ENCODE measurements at regions of chr17 and their contacts with region 1.

Region 1: GRCh38 chr17:996554-997344 is at the start of gene TIMM22:
- DNase-seq: peak; percentile 95
- ATAC-seq: peak; percentile 97
- H3K4me3 Mint-ChIP-seq: peak within 1 kb of the TSS; percentile 97
- H3K27ac Mint-ChIP-seq: peak within 1 kb of the TSS; percentile 97
- H3K4me1 Mint-ChIP-seq: peaks cover 25% of the 10 kb centered on the region
- H3K27me3 Mint-ChIP-seq: no peaks in the 10 kb centered on the region
- total RNA-seq, gene TIMM22: 9.7 to 12.5 TPM

Region 2: GRCh38 chr17:752002-752619 is 244.6 kb before region 1 on chr17 and contains the start of gene GEMIN4:
- CTCF ChIA-PET with region 1: interaction called, 16 read pairs
- DNase-seq: peak; percentile 96
- ATAC-seq: peak; percentile 88
- H3K4me3 Mint-ChIP-seq: peak within 1 kb of the TSS; percentile 89
- H3K27ac Mint-ChIP-seq: peak within 1 kb of the TSS; percentile 93
- H3K4me1 Mint-ChIP-seq: peaks cover 32% of the 10 kb centered on the region
- H3K27me3 Mint-ChIP-seq: no peaks in the 10 kb centered on the region
- total RNA-seq, gene GEMIN4: 40.8 to 43.0 TPM

Region 3: GRCh38 chr17:781805-782731 is 214.7 kb before region 1 on chr17 and contains the starts of genes GLOD4 and MRM3:
- CTCF ChIA-PET with region 1: interaction called, 33 read pairs
- DNase-seq: peak; percentile 95
- ATAC-seq: peak; percentile 96
- H3K4me3 Mint-ChIP-seq: peak within 1 kb of the TSS; percentile 97
- H3K27ac Mint-ChIP-seq: peak within 1 kb of the TSS; percentile 97
- H3K4me1 Mint-ChIP-seq: peaks cover 37% of the 10 kb centered on the region
- H3K27me3 Mint-ChIP-seq: no peaks in the 10 kb centered on the region
- total RNA-seq, gene GLOD4: 45.1 to 56.3 TPM
- total RNA-seq, gene MRM3: 21.7 to 26.5 TPM

Region 4: DNA sequence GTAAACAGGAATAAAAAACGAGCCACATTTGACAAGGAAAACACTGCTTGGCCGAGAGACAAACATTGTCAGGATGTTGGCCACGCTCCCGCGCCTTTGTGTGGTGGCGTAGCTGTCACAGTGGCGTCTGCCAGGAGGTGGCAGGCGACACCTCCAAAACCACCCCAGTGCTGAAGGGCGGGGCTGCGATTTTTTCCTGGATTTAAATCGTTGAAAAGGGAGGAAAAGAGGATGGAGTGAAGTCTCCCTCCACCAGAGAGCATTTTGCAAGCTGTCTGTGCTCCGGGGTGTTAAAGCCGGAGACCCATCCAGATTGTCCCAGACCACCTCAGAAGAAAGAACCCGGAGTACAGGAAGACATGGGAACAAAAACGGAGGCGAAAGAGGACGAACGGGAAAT is 201.9 kb before region 1 on chr17:
- CTCF ChIA-PET with region 1: interaction called, 42 read pairs
- DNase-seq: peak; percentile 54
- ATAC-seq: peak; percentile 82
- H3K4me3 Mint-ChIP-seq: no peak overlapping the region
- H3K27ac Mint-ChIP-seq: no peak overlapping the region
- H3K4me1 Mint-ChIP-seq: peaks cover 6% of the 10 kb centered on the region
- H3K27me3 Mint-ChIP-seq: no peaks in the 10 kb centered on the region

Region 5: DNA sequence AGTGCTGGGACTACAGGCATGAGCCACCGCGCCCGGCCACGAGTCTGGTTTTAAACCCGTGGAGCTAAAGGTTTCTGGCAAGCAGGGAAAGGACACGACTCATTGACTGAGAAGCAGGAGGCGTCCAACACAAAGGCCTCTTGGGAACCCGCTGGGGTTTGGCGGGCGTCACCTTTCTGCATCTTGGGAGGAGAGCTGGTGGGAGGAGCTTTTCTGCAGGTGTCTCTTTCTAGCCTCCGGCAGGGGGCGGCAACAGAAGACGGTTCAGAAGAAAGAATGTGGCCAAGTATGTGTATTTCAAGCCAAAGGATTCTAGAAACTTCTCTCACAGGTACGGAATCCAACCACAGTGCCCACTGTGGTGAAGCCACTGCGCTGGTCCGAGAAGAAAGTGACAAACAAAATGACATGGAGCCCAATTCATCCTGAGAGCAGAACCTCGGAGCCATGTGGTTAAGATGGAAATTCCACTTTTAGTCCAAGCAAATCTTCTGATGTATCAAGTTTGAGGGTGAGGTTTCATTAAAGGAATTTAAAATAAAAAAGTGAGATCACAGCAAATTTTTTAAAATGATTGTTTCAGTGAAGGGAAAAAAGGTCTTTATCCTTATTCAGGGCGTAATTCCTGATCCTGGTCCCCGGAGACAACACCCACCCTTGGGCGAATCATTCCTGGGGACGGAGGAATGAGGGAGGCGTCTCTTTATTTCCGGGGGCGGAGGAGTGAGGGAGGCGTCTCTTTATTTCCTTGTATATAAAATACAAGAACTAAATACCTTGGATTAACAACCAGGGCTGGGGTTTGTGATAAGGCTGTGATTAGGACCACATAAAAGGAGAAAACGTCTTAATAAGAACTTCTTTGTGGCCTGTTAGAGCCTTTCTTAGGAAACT is 117.0 kb before region 1 on chr17:
- CTCF ChIA-PET with region 1: interaction called, 11 read pairs
- DNase-seq: peak; percentile 78
- ATAC-seq: peak; percentile 73
- H3K4me3 Mint-ChIP-seq: no peak overlapping the region
- H3K27ac Mint-ChIP-seq: no peak overlapping the region
- H3K4me1 Mint-ChIP-seq: peaks cover 13% of the 10 kb centered on the region
- H3K27me3 Mint-ChIP-seq: peaks cover 47% of the 10 kb centered on the region